Sigmoid colon (tissue), 7 donors: ENCODE measurements at regions of chr3 and their contacts with region 1.

Region 1: DNA sequence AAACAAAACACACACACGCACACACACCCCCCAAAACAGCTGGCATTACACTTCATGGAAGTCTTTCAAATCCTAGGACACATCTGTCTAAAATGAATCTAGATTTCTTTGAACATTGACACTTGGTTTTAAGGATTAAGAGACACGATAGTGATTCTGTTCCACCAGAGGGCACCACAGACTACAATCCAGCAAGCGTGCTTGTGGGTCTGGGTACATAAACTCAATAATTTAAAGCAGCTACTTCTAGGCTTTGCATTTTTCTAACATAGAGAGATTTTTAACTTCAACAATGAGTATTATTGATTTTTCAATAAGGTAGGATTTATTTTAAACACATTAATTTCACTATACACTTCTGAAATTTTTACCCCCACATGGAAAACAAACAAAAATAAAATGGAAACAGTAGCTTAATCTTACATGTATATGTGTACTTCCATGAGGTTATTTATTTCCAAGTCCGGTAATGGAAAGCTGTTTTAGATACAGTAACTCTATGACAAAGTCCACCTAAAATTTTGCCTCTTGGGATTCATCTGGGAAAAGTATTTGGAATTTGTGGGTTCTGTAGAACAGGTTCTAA is 564.0 kb upstream of the TGFBR2 start:
- DNase-seq: peak; percentile 71
- H3K4me3 ChIP-seq: no peak overlapping the region
- H3K27ac ChIP-seq: no peak overlapping the region
- H3K4me1 ChIP-seq: peaks cover 0 to 5% (median 0%) of the 10 kb centered on the region in 4 donors
- H3K27me3 ChIP-seq: no peaks in the 10 kb centered on the region
- CTCF ChIP-seq: peak; percentile 51 to 75 (median 70)
- EP300 ChIP-seq: no peak
- POLR2A ChIP-seq: no peak

Region 2: GRCh38 chr3:29026286-29026685 is 1016.1 kb before region 1 on chr3:
- intact Hi-C with region 1: no loop called
- DNase-seq: no peak
- H3K4me3 ChIP-seq: no peak overlapping the region
- H3K27ac ChIP-seq: no peak overlapping the region
- H3K4me1 ChIP-seq: no peaks in the 10 kb centered on the region
- H3K27me3 ChIP-seq: no peaks in the 10 kb centered on the region
- CTCF ChIP-seq: no peak
- EP300 ChIP-seq: no peak
- POLR2A ChIP-seq: no peak

Region 3: DNA sequence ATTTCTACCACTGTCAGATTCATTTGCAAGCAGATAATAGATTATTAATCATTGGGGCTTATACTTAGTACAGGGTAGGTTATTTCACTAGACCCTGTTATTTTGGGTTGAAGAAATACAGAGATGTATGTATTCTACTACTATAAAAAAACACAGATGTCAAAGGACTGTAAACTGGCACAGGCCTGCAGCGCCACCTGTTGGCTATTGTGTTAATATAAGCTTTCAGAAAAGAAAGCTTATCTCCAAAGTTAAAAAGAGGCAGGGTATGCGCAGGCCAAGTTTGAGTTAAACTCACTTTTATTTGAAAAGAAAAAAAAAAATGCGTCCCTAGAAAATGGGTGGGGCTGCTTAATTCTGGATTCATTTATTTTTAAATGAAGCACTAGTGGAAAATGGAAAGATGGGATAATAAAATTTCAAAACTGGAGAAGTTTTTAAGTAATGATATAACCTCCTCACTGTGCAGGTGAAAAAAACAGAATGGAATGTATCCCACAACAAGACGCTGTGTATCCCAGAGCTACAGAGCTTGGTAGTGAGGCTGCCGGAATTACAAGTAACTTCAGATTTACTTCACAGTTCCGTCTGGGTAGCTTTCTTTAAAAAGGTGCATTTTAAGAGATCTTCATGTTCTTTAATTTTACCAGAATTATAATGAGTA is 156.9 kb after region 1 on chr3:
- intact Hi-C with region 1: loop called (anchors 2 kb)
- DNase-seq: peak; percentile 85
- H3K4me3 ChIP-seq: no peak overlapping the region
- H3K27ac ChIP-seq: no peak overlapping the region
- H3K4me1 ChIP-seq: peaks cover 0 to 12% (median 5%) of the 10 kb centered on the region in 4 donors
- H3K27me3 ChIP-seq: no peaks in the 10 kb centered on the region
- CTCF ChIP-seq: peak; percentile 18 to 86 (median 75)
- EP300 ChIP-seq: no peak
- POLR2A ChIP-seq: no peak

Region 4: DNA sequence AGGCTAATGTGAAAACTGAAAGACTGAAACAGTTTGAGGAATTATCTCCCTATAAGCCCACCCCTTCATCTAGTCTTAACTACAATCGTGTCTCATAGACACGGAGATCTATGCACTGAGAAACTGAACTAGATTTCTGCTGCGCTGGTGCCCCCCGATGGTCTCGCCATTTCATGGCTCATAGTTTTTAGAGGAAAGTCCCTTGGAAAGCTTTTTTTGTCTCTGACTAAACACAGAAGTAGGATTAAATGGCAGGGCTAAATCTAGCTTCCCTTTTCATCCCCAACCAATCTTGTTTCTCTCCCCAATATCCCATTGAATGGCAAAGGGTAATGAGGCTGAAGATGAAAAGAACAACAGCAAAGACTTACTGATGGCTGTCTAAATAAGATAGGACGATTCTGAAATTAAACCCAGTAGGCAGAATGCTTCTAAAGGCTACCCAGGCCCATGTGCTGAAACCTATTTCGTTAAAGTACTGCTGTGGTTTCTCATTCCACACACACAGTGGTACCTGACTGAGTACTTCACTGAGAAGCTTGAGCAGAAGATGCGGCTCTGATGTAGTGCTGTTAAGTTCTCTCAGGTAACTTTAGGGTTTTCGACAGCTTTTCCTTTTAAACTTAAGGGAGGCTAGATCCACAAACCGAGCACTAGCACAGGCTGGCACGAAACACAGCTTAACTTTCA is 709.4 kb after region 1 on chr3:
- intact Hi-C with region 1: loop called (anchors 5 kb)
- DNase-seq: no peak
- H3K4me3 ChIP-seq: no peak overlapping the region
- H3K27ac ChIP-seq: no peak overlapping the region
- H3K4me1 ChIP-seq: peaks cover 0 to 21% (median 8%) of the 10 kb centered on the region in 4 donors
- H3K27me3 ChIP-seq: no peaks in the 10 kb centered on the region
- CTCF ChIP-seq: peak in 2 of 4 experiments; percentile 10 to 23
- EP300 ChIP-seq: no peak
- POLR2A ChIP-seq: no peak